HEK293 (cell line): ENCODE measurements at regions of chr5 and their contacts with region 1.

Region 1: GRCh38 chr5:73170522-73170921 is 2.5 kb upstream of the TMEM174 start:
- H3K4me3 ChIP-seq: no peak overlapping the region
- H3K27ac ChIP-seq: no peak overlapping the region
- H3K4me1 ChIP-seq: no peaks in the 10 kb centered on the region
- CTCF ChIP-seq: no peak

Region 2: DNA sequence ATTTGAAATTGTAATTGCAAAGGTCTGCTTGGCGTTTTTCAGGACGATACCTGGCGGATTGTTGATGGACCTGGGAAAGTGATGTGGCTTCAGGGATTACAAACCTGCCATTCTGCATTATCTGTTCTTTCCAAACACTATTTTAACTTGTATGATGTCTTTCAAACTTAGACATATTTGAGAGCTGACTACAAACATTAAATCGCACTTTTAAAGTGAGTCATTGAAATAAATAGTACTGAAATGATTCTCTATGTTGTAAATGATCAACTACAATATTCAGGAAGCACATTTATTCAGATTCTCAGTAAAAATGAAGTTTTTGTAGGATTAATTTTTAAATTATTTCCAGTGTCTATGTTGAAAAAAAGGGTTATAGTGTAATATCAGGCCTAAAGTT is 82.5 kb before region 1 on chr5:
- CTCF ChIA-PET with region 1: interaction called, 10 read pairs
- POLR2A ChIA-PET with region 1: no interaction called
- H3K4me3 ChIP-seq: no peak overlapping the region
- H3K27ac ChIP-seq: no peak overlapping the region
- H3K4me1 ChIP-seq: no peaks in the 10 kb centered on the region; the same call in 1 of the 2 replicates
- CTCF ChIP-seq: no peak

Region 3: GRCh38 chr5:73160239-73160671 is 10.3 kb before region 1 on chr5:
- CTCF ChIA-PET with region 1: interaction called, 18 read pairs
- POLR2A ChIA-PET with region 1: no interaction called
- H3K4me3 ChIP-seq: no peak overlapping the region
- H3K27ac ChIP-seq: no peak overlapping the region
- H3K4me1 ChIP-seq: no peaks in the 10 kb centered on the region
- CTCF ChIP-seq: no peak